Activated naive CD4-positive, alpha-beta T cell treated with anti-CD3 and anti-CD28 coated beads for 36 hours (primary cell): ENCODE measurements at regions of chr18 and their contacts with region 1.

Region 1: DNA sequence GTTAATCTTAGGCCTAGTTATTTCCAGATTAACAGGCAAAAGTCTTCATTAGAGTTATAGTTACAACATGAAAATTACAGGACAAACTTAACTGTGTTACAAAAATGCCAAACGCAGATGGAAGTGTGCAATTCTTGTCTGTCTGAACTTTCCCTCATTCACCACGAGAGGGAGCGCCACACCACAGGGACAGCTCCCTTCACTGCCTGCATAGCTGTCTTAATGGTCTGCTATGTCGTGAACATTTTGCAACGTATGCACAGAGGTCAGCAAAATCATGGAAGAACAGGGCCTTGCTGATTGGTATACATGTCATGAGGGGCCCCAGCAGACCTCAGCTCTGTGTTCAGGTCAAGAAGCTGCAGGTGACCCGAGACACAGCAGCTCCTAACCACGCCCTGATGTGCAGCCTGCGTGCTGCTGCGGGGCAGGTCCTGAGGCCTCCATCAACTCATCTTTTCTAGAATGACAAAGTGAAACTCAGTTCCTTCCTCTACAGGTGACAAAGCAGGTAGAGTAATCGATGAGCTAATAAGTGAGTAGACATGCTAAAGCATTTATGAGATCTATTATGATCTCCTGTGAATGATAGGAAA is 78.8 kb upstream of the ATP8B1 start:
- DNase-seq: peak; percentile 75
- H3K4me3 Mint-ChIP-seq: no peak overlapping the region
- H3K27ac Mint-ChIP-seq: no peak overlapping the region
- H3K4me1 Mint-ChIP-seq: no peaks in the 10 kb centered on the region
- H3K27me3 Mint-ChIP-seq: peaks cover 20% of the 10 kb centered on the region

Region 2: DNA sequence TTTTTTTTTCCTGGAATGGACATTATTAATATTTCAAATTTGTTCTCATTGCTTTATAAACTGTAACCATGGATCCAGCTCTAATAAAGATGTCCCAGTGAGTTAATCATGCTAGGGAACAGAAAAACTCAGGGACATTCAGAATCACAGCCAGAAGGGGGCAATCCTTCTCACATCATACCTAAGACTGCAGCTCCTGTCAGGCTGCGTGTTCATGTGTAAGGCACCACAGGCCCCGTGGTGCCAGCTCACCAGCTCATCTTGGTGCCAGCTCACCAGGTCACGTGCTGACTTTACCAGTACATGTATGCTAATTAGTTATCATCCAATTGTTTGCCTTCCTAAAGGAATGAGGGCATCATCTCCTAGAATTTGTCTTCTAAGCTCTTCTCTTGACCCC is 77.4 kb after region 1 on chr18:
- CTCF ChIA-PET with region 1: interaction called, 4 read pairs
- intact Hi-C with region 1: loop called (anchors 5 kb)
- DNase-seq: peak; percentile 18
- H3K4me3 Mint-ChIP-seq: no peak overlapping the region
- H3K27ac Mint-ChIP-seq: no peak overlapping the region
- H3K4me1 Mint-ChIP-seq: no peaks in the 10 kb centered on the region
- H3K27me3 Mint-ChIP-seq: peaks cover 9% of the 10 kb centered on the region

Region 3: GRCh38 chr18:58117786-58118403 is 236.0 kb after region 1 on chr18:
- CTCF ChIA-PET with region 1: interaction called, 16 read pairs
- intact Hi-C with region 1: loop called (anchors 1 kb)
- DNase-seq: peak; percentile 24
- H3K4me3 Mint-ChIP-seq: no peak overlapping the region
- H3K27ac Mint-ChIP-seq: no peak overlapping the region
- H3K4me1 Mint-ChIP-seq: peaks cover 5% of the 10 kb centered on the region
- H3K27me3 Mint-ChIP-seq: no peaks in the 10 kb centered on the region

Region 4: GRCh38 chr18:58125183-58125582 is 243.3 kb after region 1 on chr18:
- CTCF ChIA-PET with region 1: interaction called, 16 read pairs
- intact Hi-C with region 1: loop called (anchors 1 kb)
- DNase-seq: no peak
- H3K4me3 Mint-ChIP-seq: no peak overlapping the region
- H3K27ac Mint-ChIP-seq: no peak overlapping the region
- H3K4me1 Mint-ChIP-seq: no peaks in the 10 kb centered on the region
- H3K27me3 Mint-ChIP-seq: no peaks in the 10 kb centered on the region

Region 5: GRCh38 chr18:58135701-58136331 is 253.9 kb after region 1 on chr18:
- CTCF ChIA-PET with region 1: interaction called, 3 read pairs
- intact Hi-C with region 1: loop called (anchors 1 kb)
- DNase-seq: peak; percentile 74
- H3K4me3 Mint-ChIP-seq: no peak overlapping the region
- H3K27ac Mint-ChIP-seq: no peak overlapping the region
- H3K4me1 Mint-ChIP-seq: peaks cover 7% of the 10 kb centered on the region
- H3K27me3 Mint-ChIP-seq: peaks cover 9% of the 10 kb centered on the region

Region 6: GRCh38 chr18:58180738-58181353 is 298.9 kb after region 1 on chr18:
- CTCF ChIA-PET with region 1: interaction called, 7 read pairs
- intact Hi-C with region 1: loop called (anchors 1 kb)
- DNase-seq: peak; percentile 83
- H3K4me3 Mint-ChIP-seq: no peak overlapping the region
- H3K27ac Mint-ChIP-seq: no peak overlapping the region
- H3K4me1 Mint-ChIP-seq: no peaks in the 10 kb centered on the region
- H3K27me3 Mint-ChIP-seq: no peaks in the 10 kb centered on the region

Region 7: DNA sequence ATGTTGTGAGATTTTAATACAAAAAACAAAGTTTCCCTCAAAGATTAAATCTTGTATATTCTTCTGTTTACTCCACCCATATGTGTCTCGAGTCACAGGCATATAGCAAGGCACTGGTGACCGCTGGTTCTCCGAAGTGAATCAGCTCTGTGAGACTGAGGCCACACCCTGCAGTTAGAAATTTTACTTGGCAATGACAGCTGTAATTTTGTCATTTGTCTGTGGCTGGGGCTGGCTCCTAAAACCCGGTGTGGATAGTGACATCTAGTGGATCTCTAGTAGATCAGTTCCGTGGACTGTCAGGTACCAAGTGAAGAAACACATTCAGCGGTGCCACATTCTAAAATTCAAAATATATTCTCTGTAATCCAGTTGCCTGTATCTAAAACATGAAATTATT is 440.1 kb after region 1 on chr18:
- CTCF ChIA-PET with region 1: no interaction called
- intact Hi-C with region 1: loop called (anchors 1 kb)
- DNase-seq: peak; percentile 80
- H3K4me3 Mint-ChIP-seq: no peak overlapping the region
- H3K27ac Mint-ChIP-seq: no peak overlapping the region
- H3K4me1 Mint-ChIP-seq: peaks cover 16% of the 10 kb centered on the region
- H3K27me3 Mint-ChIP-seq: no peaks in the 10 kb centered on the region